Activated CD4-positive, alpha-beta T cell treated with anti-CD3 and anti-CD28 coated beads, Interleukin-2, amount 10 ng/mL, durations not matched to agents 7 days and 5 days (primary cell): ENCODE measurements at regions of chr4 and their contacts with region 1.

Region 1: DNA sequence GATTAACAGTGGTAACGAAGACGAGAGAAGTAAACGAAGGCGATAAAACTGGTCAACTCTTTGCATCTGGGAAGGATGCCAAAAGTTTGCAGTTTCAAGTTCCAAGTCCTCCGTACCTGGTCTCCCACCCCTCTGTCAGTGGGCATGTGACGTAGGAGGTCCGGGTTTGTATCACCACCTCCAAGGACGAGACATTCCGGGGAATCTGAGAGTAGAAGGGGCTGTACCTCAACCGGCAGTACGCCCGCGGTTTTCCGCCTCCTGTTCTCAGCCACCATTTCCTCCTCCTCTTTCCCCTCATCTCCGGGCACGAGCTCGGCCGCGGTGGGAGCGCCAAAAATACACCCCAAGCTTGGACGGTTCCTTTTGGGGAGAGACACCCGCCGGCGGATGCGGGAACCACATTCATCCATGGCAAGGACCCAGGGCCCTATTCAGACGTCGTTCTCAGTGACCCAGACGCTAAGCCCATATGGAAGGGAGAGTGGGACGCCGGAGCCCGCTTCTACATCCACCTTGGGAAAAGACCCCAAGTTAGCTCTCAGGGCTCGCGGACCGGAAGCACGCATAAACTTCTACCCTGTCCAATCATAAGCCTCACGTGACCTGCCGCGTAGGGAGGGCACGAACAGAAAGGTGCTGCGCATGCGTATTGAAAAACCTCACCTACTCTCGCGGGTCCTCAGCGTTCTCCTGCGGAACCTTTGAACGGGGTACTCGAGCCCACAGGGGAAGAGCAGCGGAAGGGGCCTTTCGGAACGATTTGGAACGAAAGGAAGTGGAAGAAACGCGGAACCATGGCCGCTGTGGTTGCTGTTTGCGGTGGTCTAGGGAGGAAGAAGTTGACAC is at the starts of genes HELQ and MRPS18C:
- DNase-seq: peak; percentile 99
- H3K4me3 Mint-ChIP-seq: peak within 1 kb of the TSS; percentile 100
- H3K27ac Mint-ChIP-seq: peak within 1 kb of the TSS; percentile 100
- H3K4me1 Mint-ChIP-seq: peaks cover 44% of the 10 kb centered on the region
- H3K27me3 Mint-ChIP-seq: no peaks in the 10 kb centered on the region
- total RNA-seq, gene HELQ: 14.0 to 16.2 TPM
- total RNA-seq, gene MRPS18C: 61.0 to 70.1 TPM

Region 2: GRCh38 chr4:83440899-83441298 is 14.6 kb before region 1 on chr4:
- CTCF ChIA-PET with region 1: interaction called, 7 read pairs
- POLR2A ChIA-PET with region 1: interaction called, 10 read pairs
- DNase-seq: no peak
- H3K4me3 Mint-ChIP-seq: no peak overlapping the region
- H3K27ac Mint-ChIP-seq: no peak overlapping the region
- H3K4me1 Mint-ChIP-seq: no peaks in the 10 kb centered on the region
- H3K27me3 Mint-ChIP-seq: no peaks in the 10 kb centered on the region